ENCODE measurements at regions of chr12 and their contacts with region 1.

Region 1: GRCh38 chr12:120079411-120080026 is 37.0 kb downstream of the RAB35 start:
- DNase-seq: peak in 1 of 3 donors; percentile 13
- ATAC-seq: peak in 1 of 4 donors; percentile 67
- H3K4me3 ChIP-seq: no peak overlapping the region
- H3K27ac ChIP-seq: no peak overlapping the region
- H3K4me1 ChIP-seq: no peaks in the 10 kb centered on the region
- H3K27me3 ChIP-seq: no peaks in the 10 kb centered on the region
- CTCF ChIP-seq: no peak
- POLR2A ChIP-seq: no peak

Region 2: DNA sequence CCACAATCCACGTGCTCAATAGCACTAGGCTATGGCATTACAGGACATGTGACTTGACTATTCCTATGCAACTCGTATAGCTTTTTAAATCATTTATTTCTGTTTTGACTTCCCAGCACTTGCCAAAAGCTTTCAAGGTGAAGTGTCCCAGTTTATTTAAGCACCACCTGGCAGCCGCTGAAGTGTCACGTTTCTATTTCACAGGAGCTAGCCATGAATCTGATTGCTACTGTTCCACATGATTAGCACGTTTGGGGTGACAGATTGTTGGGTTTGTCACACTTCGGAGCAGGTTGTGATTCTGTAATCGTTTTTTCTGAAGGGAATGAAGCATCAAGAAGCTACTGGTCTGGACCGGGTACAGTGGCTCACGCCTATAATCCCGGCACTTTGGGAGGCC is 130.4 kb before region 1 on chr12:
- intact Hi-C with region 1: loop called in 1 of 2 experiments (anchors 10 kb)
- DNase-seq: no peak
- ATAC-seq: no peak
- H3K4me3 ChIP-seq: no peak overlapping the region
- H3K27ac ChIP-seq: no peak overlapping the region
- H3K4me1 ChIP-seq: no peaks in the 10 kb centered on the region
- H3K27me3 ChIP-seq: no peaks in the 10 kb centered on the region
- CTCF ChIP-seq: no peak
- POLR2A ChIP-seq: no peak

Region 3: GRCh38 chr12:120317224-120318105 is 237.9 kb after region 1 on chr12:
- intact Hi-C with region 1: no loop called
- DNase-seq: peak; percentile 99
- ATAC-seq: peak; percentile 93 to 96 (median 94)
- H3K4me3 ChIP-seq: peak overlapping the region; percentile 47 to 65 (median 60)
- H3K27ac ChIP-seq: peak overlapping the region; percentile 88 to 94 (median 90)
- H3K4me1 ChIP-seq: peaks cover 0 to 37% (median 9%) of the 10 kb centered on the region in 4 donors
- H3K27me3 ChIP-seq: no peaks in the 10 kb centered on the region
- CTCF ChIP-seq: peak; percentile 37 to 54 (median 42)
- POLR2A ChIP-seq: peak; percentile 96